Prostate gland (tissue), 2 donors: ENCODE measurements at regions of chr2 and their contacts with region 1.

Region 1: GRCh38 chr2:177888581-177888980 is 184.0 kb downstream of the PDE11A start:
- DNase-seq: no peak
- H3K4me3 ChIP-seq: no peak overlapping the region
- H3K27ac ChIP-seq: no peak overlapping the region
- H3K4me1 ChIP-seq: no peaks in the 10 kb centered on the region
- H3K27me3 ChIP-seq: no peaks in the 10 kb centered on the region
- CTCF ChIP-seq: no peak
- POLR2A ChIP-seq: no peak

Region 2: DNA sequence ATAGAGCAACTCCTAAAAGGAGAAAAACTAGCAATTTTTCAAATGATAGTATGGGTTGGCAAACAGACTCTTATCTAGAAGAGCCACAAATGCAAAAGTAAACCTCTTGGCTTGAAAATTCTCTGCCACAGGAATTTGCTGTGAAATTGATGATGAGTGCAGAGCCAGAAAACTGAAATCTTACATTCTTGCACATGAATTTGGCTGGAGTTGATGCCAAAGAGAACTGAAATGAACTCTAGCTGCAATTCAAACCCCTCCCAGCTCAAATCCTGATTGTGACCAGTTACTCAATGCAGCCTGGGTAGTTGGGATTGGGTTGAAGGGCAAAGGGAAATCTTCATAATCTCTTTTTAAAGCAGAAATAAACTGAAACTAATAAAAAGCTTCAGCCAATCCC is 82.6 kb before region 1 on chr2:
- intact Hi-C with region 1: loop called (anchors 10 kb)
- DNase-seq: no peak
- H3K4me3 ChIP-seq: no peak overlapping the region
- H3K27ac ChIP-seq: no peak overlapping the region
- H3K4me1 ChIP-seq: no peaks in the 10 kb centered on the region
- H3K27me3 ChIP-seq: no peaks in the 10 kb centered on the region
- CTCF ChIP-seq: no peak
- POLR2A ChIP-seq: no peak

Region 3: GRCh38 chr2:177908182-177908581 is 19.6 kb after region 1 on chr2:
- intact Hi-C with region 1: no loop called
- DNase-seq: no peak
- H3K4me3 ChIP-seq: no peak overlapping the region
- H3K27ac ChIP-seq: no peak overlapping the region
- H3K4me1 ChIP-seq: no peaks in the 10 kb centered on the region
- H3K27me3 ChIP-seq: no peaks in the 10 kb centered on the region
- CTCF ChIP-seq: no peak
- POLR2A ChIP-seq: no peak